ENCODE measurements at regions of chr20 and their contacts with region 1.

Region 1: DNA sequence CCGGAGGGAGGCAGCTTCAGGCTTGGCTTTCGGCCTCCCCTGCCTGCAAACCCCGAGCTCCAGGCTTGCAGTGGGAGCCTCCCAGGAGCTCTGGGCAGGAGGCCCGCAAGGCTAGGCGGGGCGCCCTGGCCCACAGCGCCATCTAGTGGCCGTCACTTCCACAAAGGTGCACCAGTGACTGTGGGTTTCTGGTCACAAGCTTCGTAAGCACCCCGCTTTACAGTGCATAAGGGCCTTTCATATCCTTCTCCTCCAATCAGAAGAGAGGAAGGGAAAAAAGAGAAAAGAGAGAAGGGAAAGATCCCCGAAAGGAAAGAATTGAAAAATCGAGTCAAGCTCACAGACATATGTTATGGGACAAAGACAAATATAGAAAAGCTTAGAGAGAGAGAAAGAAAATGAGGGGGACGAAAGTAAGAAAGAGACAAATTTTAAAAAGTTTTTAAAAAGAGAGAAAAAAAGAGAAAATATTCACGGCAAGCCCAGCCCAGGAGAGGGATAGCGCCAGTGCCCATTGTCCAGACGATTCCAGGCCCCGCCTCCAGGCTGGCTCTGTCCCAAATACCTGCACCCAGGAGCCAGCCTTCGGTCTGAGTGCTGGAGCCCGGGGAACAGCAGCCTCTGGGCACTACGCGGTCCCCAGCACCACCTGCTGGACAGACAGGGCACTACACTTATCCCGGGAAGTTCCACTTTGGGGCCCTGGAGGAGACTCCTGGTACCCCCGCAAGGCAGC is 207.1 kb downstream of the PREX1 start:
- DNase-seq: peak; percentile 88 to 96
- ATAC-seq: peak; percentile 94
- H3K4me3 ChIP-seq: no peak overlapping the region
- H3K27ac ChIP-seq: no peak overlapping the region
- H3K4me1 ChIP-seq: no peaks in the 10 kb centered on the region
- H3K27me3 ChIP-seq: no peaks in the 10 kb centered on the region

Region 2: GRCh38 chr20:47205577-47206498 is 1414.8 kb before region 1 on chr20:
- intact Hi-C with region 1: loop called in 1 of 2 experiments (anchors 10 kb)
- DNase-seq: peak in 1 of 2 donors; percentile 91
- ATAC-seq: peak; percentile 59
- H3K4me3 ChIP-seq: no peak overlapping the region
- H3K27ac ChIP-seq: no peak overlapping the region
- H3K4me1 ChIP-seq: no peaks in the 10 kb centered on the region
- H3K27me3 ChIP-seq: no peaks in the 10 kb centered on the region

Region 3: DNA sequence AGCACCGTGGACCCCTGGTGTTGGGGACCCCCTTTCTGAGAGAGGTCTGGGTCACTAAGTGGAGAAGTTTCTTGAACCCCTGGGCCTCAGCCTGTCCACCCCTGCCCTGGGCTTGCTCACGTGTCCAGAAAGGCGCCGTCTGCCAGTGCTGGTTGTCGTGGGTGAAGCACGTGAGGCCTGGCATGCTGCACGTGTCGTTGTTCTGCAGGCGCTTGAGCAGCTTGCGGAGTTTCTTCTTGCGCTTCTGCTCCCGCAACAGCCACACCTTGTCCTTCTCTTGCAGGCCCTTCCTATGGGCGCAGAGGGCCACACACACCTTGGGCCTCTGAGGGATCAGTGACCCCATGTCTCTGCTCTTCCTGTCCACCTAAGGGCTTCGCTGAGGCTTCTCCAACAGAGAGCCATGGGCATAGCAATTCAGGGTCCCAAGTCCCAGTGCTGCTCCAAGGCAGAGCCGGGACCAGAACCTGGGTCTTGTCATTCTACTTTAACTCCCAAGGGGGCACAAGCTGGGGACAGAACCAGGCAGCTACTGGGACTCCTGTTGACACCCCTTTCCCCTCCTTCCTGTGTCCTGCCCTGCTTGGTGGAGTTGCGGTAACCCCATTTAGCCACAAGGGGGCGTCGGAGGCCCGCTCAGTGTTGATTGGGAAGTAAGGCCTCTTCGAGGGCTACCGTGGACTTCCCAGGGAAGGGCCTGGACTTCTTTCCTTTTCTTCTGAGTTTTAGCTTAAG is 957.2 kb before region 1 on chr20:
- intact Hi-C with region 1: loop called (anchors 1 to 5 kb)
- DNase-seq: peak; percentile 81 to 93
- ATAC-seq: peak; percentile 90
- H3K4me3 ChIP-seq: no peak overlapping the region
- H3K27ac ChIP-seq: no peak overlapping the region
- H3K4me1 ChIP-seq: no peaks in the 10 kb centered on the region
- H3K27me3 ChIP-seq: no peaks in the 10 kb centered on the region

Region 4: GRCh38 chr20:47677635-47678453 is 942.8 kb before region 1 on chr20:
- intact Hi-C with region 1: loop called (anchors 1 to 2 kb)
- DNase-seq: no peak
- ATAC-seq: peak; percentile 54
- H3K4me3 ChIP-seq: no peak overlapping the region
- H3K27ac ChIP-seq: no peak overlapping the region
- H3K4me1 ChIP-seq: no peaks in the 10 kb centered on the region
- H3K27me3 ChIP-seq: no peaks in the 10 kb centered on the region

Region 5: DNA sequence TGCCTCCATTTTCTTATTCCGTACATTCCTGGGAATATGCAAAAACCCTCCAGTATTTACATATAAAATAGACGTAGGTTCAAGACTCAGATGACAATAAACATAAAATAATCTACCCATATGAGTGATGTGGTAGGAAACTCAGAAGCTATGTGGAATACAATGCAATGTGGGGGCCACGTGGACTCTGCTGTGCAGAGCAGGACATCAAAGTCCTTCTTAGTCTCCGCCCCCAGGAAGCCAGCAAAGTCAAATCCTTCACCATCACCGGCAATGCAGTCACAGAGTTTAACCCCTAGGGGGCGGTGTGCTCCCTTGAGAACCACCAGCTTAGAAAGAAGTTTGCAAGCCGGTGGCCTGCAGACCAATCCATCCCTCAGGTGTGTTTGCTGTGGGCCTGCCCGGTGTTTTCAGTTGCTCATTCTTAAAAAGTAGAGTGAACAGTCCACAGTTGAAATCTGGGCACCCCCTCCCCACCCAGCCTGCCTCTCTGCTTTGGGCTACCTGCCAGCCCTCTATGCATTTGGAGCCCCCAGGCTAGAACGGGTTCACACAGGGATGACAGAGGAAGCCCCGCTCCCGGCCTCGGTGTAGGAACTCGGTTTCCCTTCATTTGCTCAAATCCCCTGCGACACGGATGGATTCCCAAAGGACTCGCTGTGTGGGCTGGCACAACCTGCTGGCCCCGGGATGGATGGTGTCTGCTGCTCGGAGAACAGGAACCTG is 895.3 kb before region 1 on chr20:
- intact Hi-C with region 1: loop called in 1 of 2 experiments (anchors 2 kb)
- DNase-seq: peak; percentile 76 to 83
- ATAC-seq: peak; percentile 76
- H3K4me3 ChIP-seq: no peak overlapping the region
- H3K27ac ChIP-seq: no peak overlapping the region
- H3K4me1 ChIP-seq: peaks cover 0 to 4% of the 10 kb centered on the region in 2 donors
- H3K27me3 ChIP-seq: no peaks in the 10 kb centered on the region

Region 6: DNA sequence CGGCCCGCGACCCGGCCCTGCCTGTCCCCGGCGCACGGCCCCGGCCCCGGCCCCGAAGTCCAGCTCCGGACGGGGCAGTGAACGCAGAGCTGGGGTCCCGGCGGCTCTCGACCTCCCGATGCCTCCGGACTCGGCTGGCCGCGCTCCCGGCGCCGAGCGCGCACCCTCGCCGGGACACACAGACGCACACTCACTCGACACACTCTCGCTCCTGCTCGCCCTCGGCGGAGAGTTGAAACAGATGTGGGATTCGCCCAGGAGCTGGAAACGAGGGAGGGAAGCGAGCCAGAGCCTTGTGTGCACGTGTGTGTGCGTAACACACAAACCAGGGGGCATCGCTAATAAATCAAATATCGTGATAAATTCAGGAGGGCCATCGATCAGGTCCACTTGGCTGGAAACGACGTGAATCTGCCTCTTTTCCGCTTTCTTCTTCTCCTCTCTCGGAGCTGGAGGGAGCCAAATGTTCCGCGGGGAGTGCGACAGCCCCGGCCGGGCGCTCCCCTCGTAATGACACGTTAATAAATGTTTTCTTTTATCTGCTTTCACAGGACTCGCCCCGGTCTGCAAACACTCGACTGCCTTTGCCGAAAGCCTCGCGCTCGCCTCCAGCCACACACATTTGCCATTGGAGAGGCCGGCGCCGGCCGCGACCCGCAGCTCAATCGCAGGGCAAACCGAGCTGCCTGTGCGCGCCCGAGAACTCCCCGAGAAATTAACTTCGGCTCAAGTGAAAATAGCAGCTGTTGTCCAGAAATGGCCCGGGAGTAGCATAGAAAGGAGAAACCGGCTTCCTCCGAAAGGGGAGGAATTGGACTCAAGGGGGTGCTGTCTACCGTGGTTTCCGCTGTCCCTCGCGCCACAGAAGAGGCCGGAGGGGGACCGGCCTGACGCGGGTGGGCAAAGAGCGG is 834.6 kb before region 1 on chr20:
- intact Hi-C with region 1: loop called (anchors 1 to 5 kb)
- DNase-seq: peak; percentile 80 to 88
- ATAC-seq: peak; percentile 89
- H3K4me3 ChIP-seq: peak overlapping the region; percentile 51 to 88
- H3K27ac ChIP-seq: peak overlapping the region; percentile 14 to 36
- H3K4me1 ChIP-seq: no peaks in the 10 kb centered on the region
- H3K27me3 ChIP-seq: no peaks in the 10 kb centered on the region

Region 7: GRCh38 chr20:48012197-48013085 is 608.2 kb before region 1 on chr20:
- intact Hi-C with region 1: no loop called
- DNase-seq: no peak
- ATAC-seq: no peak
- H3K4me3 ChIP-seq: no peak overlapping the region
- H3K27ac ChIP-seq: no peak overlapping the region
- H3K4me1 ChIP-seq: no peaks in the 10 kb centered on the region
- H3K27me3 ChIP-seq: no peaks in the 10 kb centered on the region